AG04449 (cell line): ENCODE measurements at regions of chr6 and their contacts with region 1.

Region 1: GRCh38 chr6:165877192-165877591 is 214.2 kb upstream of the PDE10A start:
- DNase-seq: no peak
- H3K4me3 ChIP-seq: no peak overlapping the region
- CTCF ChIP-seq: no peak

Region 2: DNA sequence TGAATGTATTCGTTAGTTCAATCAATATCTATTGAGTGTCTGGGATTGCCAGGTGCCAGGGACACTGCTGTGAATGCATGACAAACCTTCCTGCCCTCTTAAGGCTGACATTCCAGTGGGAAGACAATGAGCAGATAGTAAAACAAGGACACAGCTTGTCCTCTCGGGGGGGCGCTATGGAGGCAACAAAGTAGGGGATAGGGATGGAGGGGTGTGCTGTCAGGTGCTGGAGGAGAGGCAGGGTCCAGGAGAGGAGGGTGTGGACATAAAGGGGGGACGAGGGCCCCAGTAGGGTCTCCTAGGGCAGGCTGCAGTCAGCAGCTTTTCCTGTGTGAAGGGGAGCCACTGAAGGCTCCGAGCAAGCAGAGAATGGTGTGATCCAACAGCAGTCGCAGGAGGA is 16.0 kb before region 1 on chr6:
- CTCF ChIA-PET with region 1: no interaction called
- POLR2A ChIA-PET with region 1: no interaction called
- DNase-seq: no peak
- H3K4me3 ChIP-seq: no peak overlapping the region
- CTCF ChIP-seq: no peak

Region 3: DNA sequence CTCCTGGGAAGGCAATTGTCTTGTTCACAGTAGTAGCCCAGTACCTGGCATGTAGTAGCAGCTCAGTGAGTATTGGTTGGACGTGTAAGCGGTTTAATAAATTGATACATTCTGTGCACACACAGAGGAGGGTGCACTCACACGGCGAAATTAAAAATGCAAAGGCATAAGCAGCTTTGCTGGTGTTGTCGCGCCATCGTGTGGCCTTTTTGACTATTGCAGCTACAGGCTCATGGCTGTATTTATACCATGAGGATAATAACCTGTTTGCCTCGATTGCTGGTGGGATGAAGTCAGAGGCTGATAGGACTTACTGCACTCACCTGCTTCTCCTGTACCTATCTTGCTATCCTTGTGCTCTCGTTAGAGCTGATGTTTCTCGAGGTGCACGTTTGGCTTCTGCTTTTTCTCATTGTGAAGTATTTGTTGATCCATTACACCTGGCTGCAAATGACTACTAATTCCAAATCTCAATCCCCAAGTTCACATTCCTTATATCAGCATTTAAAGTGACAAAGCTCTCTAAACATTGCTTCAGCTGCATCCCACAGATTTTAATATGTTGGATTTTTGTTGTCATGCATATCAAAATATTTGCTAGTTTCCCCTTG is 229.0 kb after region 1 on chr6:
- CTCF ChIA-PET with region 1: interaction called, 172 read pairs
- POLR2A ChIA-PET with region 1: no interaction called
- DNase-seq: peak; percentile 10
- H3K4me3 ChIP-seq: no peak overlapping the region
- CTCF ChIP-seq: peak; percentile 84